Activated T-helper 2 cell treated with anti-CD3 and anti-CD28 coated beads, Interferon-gamma antibody, Interleukin-2, Interleukin-4, amounts not matched to agents 10 μg/mL and 5 μg/mL and 100 μg/mL, durations not matched to agents 14 hours and 24 hours and 36 hours (primary cell): ENCODE measurements at regions of chr6 and their contacts with region 1.

Region 1: DNA sequence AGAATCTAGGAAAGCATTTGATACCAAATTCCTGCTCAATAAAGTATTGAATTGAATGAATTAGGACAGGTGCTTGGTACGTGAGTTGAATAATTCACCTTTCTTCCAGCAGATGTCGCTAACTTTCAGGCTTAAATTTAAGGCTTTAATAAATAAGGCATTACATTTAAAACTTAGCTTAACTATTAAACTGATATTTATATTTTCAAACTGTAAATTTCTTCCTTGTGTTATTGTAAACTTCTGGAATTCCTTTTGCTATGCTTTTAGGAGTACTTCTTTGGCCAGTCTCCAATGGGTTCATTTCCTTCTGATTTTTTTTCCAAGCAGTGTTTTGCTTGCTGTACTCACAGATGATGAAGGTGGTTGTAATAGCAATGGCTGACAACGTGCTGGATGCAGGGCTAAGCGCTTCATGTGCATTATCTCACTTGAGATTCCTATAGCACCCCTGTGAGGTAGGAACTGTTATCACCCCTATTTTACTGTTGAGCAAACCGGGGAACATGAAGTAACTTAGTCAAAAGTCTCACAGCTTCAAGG is 71.3 kb upstream of the SLC2A12 start:
- DNase-seq: no peak
- H3K4me3 Mint-ChIP-seq: no peak overlapping the region
- H3K27ac Mint-ChIP-seq: no peak overlapping the region
- H3K4me1 Mint-ChIP-seq: no peaks in the 10 kb centered on the region
- H3K27me3 Mint-ChIP-seq: peaks cover 4% of the 10 kb centered on the region

Region 2: DNA sequence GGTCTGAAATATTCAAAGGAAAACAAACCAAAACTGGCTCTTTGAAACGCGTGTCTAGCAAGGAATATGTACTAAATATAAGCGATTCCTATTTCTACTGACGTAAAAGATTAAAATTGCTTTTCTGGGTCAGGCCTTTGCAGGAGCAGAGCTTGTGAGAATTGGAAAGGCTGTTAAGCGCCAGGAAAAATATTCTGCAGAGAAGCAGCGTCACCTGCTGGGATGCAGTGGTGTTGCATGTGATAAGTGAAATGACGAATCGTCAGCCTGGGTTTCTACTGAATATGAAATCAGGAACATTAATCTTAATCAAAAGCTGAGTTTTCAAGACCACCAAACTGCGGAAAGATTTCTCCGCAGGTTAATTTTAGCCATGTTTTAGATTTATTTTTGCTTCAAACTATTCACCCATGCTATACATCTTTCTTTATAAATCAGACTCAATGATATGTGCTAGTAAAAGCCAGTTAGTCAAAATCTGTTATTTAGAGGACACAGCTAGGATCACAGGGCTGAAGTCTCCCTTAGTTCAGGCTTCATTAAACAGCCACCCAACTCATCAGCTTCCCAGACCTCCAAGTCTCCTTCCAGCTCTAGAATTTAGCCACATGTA is 758.8 kb after region 1 on chr6:
- intact Hi-C with region 1: loop called (anchors 5 kb)
- DNase-seq: peak; percentile 28
- H3K4me3 Mint-ChIP-seq: no peak overlapping the region
- H3K27ac Mint-ChIP-seq: no peak overlapping the region
- H3K4me1 Mint-ChIP-seq: no peaks in the 10 kb centered on the region
- H3K27me3 Mint-ChIP-seq: peaks cover 25% of the 10 kb centered on the region